Activated CD4-positive, alpha-beta memory T cell treated with anti-CD3 and anti-CD28 coated beads, Interleukin-2, amount 10 ng/mL, durations not matched to agents 7 days and 5 days (primary cell): ENCODE measurements at regions of chr3 and their contacts with region 1.

Region 1: GRCh38 chr3:197029511-197030167 is at the start of gene MELTF:
- DNase-seq: peak; percentile 75
- H3K4me3 Mint-ChIP-seq: peak within 1 kb of the TSS; percentile 67
- H3K27ac Mint-ChIP-seq: no peak within 1 kb of the TSS
- H3K4me1 Mint-ChIP-seq: peaks cover 27% of the 10 kb centered on the region
- H3K27me3 Mint-ChIP-seq: peaks cover 3% of the 10 kb centered on the region
- total RNA-seq, gene MELTF: 5.1 to 6.1 TPM

Region 2: GRCh38 chr3:196754091-196754923 is 275.3 kb before region 1 on chr3:
- CTCF ChIA-PET with region 1: no interaction called
- POLR2A ChIA-PET with region 1: no interaction called
- DNase-seq: no peak
- H3K4me3 Mint-ChIP-seq: no peak overlapping the region
- H3K27ac Mint-ChIP-seq: no peak overlapping the region
- H3K4me1 Mint-ChIP-seq: peaks cover 35% of the 10 kb centered on the region
- H3K27me3 Mint-ChIP-seq: no peaks in the 10 kb centered on the region

Region 3: DNA sequence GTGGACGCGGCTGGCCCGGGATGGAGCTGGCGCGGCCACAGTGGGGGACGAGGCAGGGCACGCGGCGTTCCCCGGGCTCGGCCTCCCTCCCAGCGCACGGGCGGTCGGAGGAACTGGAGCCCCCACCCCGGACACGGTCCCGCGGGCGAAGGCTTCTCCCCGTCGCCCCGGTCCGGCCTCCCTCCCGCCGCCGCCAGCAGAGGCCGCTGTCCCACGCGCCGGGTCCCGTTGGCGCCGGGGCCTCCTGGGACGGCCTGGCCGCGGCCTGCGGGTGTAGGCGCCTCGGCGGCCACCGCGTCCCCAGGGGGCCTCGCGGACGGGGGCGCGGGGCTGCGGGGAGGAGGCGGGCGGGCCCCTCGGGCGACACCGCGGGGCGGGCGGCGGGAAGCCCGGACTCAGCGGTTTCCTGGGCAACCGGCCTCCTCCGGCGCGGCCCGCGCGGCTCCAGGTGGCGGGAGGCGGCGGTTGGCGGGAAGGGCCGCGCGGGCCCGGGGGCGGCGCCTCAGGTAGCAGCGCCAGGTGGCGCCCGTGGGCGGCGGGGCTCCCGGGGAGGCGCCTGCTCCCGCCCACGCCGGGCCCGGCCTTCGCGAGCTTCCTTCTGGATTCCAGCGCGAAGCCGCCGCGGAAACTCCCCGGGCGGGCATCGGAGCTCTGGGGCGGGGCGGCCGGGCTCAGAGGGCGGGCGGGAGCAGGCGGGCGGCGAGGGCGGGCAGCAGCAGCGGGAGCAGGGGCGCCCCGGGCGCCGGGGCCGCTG is 26.8 kb before region 1 on chr3:
- CTCF ChIA-PET with region 1: interaction called, 18 read pairs
- POLR2A ChIA-PET with region 1: interaction called, 21 read pairs
- DNase-seq: peak; percentile 76
- H3K4me3 Mint-ChIP-seq: no peak overlapping the region
- H3K27ac Mint-ChIP-seq: no peak overlapping the region
- H3K4me1 Mint-ChIP-seq: peaks cover 9% of the 10 kb centered on the region
- H3K27me3 Mint-ChIP-seq: no peaks in the 10 kb centered on the region

Region 4: DNA sequence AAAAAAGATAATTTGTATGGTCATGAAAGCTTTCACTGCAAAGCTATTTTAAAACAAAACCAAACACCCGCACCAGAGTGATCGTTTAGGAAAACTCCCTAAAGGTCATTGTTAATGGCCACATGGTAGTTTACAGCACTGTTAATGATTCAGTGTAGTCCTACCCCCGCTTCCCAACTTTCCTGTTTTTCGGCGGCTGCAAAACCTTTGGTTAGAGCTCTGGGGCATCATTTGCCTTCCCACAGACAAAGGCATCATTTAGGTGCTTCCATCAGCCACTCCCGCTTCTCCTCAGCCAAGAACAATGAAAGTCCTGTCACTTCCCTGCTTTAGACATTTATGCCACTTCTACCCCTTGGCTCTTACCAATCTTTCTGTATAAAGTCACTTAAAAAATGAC is 10.6 kb before region 1 on chr3:
- CTCF ChIA-PET with region 1: interaction called, 10 read pairs
- POLR2A ChIA-PET with region 1: interaction called, 5 read pairs
- DNase-seq: no peak
- H3K4me3 Mint-ChIP-seq: no peak overlapping the region
- H3K27ac Mint-ChIP-seq: no peak overlapping the region
- H3K4me1 Mint-ChIP-seq: peaks cover 14% of the 10 kb centered on the region
- H3K27me3 Mint-ChIP-seq: peaks cover 13% of the 10 kb centered on the region